Left colon (tissue), 2 donors: ENCODE measurements at regions of chr14 and their contacts with region 1.

Region 1: GRCh38 chr14:54566410-54567223 is at the start of gene SAMD4A:
- DNase-seq: peak; percentile 79 to 82
- ATAC-seq: peak; percentile 25
- total RNA-seq, gene SAMD4A: 11.2 to 26.2 TPM

Region 2: DNA sequence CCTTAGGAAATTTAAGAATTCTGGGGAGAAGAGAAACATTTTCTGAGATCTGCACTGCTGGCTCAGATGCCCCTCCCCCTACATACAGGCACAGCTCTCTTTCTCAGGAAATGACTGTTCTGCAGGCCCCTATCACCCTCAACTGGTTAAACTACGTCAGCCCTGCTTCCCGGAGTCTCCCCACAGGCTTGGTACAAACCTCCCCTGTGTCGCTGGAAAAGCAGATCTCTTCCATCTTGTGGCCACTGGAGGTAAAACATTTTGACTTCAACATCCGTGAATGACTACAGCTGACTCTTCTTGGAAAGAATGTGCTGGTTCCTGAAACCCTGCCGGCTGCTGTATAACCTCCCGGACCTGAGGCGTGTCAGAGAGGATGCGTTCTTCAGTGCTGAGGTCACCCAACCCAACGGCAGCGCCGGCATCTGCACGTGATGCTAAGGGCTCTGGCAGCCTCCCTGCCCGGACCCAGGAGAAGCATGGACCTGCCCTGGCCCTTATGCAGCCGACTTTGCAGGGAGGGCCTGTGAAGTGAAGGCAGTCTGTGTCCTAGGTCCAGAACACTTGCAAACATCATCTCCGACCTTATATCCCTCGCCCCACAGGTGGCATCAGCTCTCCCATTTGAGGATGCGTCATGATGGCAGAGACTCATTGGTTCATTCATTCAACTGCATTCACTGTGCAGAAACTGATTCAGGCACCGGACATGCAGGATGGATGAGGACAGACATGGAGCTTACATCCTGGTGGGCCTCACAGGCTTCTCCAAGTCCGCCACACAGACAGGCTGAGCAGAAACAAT is 206.8 kb after region 1 on chr14:
- intact Hi-C with region 1: loop called (anchors 5 to 10 kb)
- DNase-seq: peak; percentile 63 to 79
- ATAC-seq: peak; percentile 87

Region 3: GRCh38 chr14:54805521-54806322 is 239.1 kb after region 1 on chr14:
- intact Hi-C with region 1: loop called (anchors 10 kb)
- DNase-seq: peak; percentile 60 to 86
- ATAC-seq: peak; percentile 93